Activated B cell treated with CpG ODN at 0.5 μM for 24 hours (primary cell): ENCODE measurements at regions of chr6 and their contacts with region 1.

Region 1: DNA sequence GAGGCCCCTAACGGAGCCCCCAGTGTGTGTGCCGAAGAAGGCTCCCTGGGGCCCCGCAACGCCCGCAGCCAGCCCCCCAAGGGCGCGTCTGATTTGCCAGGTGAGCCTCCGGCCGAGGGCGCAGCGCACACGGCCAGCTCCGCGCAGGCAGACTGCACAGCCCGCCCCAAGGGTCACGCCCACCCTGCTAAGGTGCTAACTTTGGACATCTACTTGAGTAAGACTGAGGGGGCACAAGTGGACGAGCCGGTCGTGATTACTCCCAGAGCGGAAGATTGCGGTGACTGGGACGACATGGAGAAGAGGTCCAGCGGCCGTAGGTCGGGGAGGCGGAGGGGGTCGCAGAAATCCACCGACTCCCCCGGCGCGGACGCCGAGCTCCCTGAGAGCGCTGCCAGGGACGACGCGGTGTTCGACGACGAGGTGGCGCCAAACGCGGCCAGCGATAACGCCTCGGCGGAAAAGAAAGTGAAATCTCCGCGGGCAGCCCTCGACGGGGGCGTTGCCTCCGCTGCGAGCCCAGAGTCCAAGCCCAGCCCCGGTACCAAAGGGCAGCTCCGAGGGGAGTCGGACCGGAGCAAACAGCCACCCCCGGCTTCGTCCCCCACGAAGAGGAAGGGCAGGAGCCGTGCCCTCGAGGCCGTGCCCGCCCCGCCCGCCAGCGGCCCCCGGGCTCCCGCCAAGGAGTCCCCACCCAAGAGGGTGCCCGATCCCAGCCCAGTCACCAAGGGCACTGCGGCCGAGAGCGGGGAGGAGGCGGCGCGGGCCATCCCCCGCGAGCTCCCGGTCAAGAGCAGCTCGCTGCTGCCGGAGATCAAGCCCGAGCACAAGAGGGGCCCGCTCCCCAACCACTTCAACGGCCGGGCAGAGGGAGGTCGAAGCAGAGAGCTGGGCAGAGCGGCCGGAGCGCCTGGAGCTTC is 117.0 kb downstream of the RTN4IP1 start:
- DNase-seq: peak; percentile 79
- ATAC-seq: peak; percentile 68
- H3K4me3 Mint-ChIP-seq: peak overlapping the region; percentile 97
- H3K27ac Mint-ChIP-seq: peak overlapping the region; percentile 94
- H3K4me1 Mint-ChIP-seq: peaks cover 62% of the 10 kb centered on the region
- H3K27me3 Mint-ChIP-seq: no peaks in the 10 kb centered on the region
- CTCF ChIP-seq: no peak

Region 2: GRCh38 chr6:106347341-106347740 is 165.0 kb before region 1 on chr6:
- CTCF ChIA-PET with region 1: no interaction called
- POLR2A ChIA-PET with region 1: no interaction called
- intact Hi-C with region 1: no loop called
- DNase-seq: no peak
- ATAC-seq: no peak
- H3K4me3 Mint-ChIP-seq: no peak overlapping the region
- H3K27ac Mint-ChIP-seq: no peak overlapping the region
- H3K4me1 Mint-ChIP-seq: no peaks in the 10 kb centered on the region
- H3K27me3 Mint-ChIP-seq: peaks cover 13% of the 10 kb centered on the region
- CTCF ChIP-seq: no peak

Region 3: DNA sequence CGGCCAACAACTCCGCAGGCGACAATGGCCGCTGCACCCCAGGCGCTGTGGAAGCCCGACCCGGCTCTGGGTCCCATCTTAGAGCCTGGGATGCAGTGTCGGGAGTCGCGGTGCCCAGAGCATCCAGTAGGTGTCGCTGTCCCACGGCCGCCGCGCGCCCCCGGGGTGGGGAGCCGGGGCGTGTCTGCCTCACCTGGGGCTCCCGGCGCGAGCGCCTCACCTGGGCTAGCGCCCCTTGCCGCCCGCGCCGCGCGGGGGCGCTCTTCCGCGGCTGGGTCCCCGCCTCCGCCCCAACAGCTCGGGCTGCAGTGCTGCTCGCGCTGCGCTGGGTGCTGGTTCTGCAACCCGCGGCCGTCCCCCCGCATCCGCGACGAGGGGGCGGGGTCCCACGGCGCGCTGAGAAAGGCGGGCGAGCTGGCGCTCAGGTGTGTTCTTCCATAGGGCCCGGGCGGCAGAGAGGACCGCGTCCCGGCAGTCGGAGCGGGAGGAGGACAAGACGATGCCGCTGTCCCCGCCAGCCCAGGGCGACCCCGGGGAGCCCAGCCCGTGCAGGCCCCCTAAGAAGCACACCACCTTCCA is 151.8 kb before region 1 on chr6 and contains the start of gene CRYBG1:
- CTCF ChIA-PET with region 1: interaction called, 3 read pairs
- POLR2A ChIA-PET with region 1: no interaction called
- intact Hi-C with region 1: loop called (anchors 2 kb)
- DNase-seq: peak; percentile 67
- ATAC-seq: peak; percentile 80
- H3K4me3 Mint-ChIP-seq: peak within 1 kb of the TSS; percentile 85
- H3K27ac Mint-ChIP-seq: no peak within 1 kb of the TSS
- H3K4me1 Mint-ChIP-seq: peaks cover 11% of the 10 kb centered on the region
- H3K27me3 Mint-ChIP-seq: peaks cover 29% of the 10 kb centered on the region
- CTCF ChIP-seq: peak; percentile 80
- total RNA-seq, gene CRYBG1: 32.3 and 33.6 TPM in 2 replicates

Region 4: GRCh38 chr6:106525111-106525881 is 13.0 kb after region 1 on chr6:
- CTCF ChIA-PET with region 1: interaction called, 94 read pairs
- POLR2A ChIA-PET with region 1: interaction called, 201 read pairs
- intact Hi-C with region 1: loop called (anchors 1 kb)
- DNase-seq: no peak
- ATAC-seq: peak; percentile 35
- H3K4me3 Mint-ChIP-seq: peak overlapping the region; percentile 83
- H3K27ac Mint-ChIP-seq: peak overlapping the region; percentile 89
- H3K4me1 Mint-ChIP-seq: peaks cover 81% of the 10 kb centered on the region
- H3K27me3 Mint-ChIP-seq: no peaks in the 10 kb centered on the region
- CTCF ChIP-seq: no peak

Region 5: GRCh38 chr6:106539936-106540335 is 27.6 kb after region 1 on chr6:
- CTCF ChIA-PET with region 1: interaction called, 12 read pairs
- POLR2A ChIA-PET with region 1: interaction called, 44 read pairs
- intact Hi-C with region 1: no loop called
- DNase-seq: no peak
- ATAC-seq: no peak
- H3K4me3 Mint-ChIP-seq: peak overlapping the region; percentile 37
- H3K27ac Mint-ChIP-seq: peak overlapping the region; percentile 80
- H3K4me1 Mint-ChIP-seq: peaks cover 58% of the 10 kb centered on the region
- H3K27me3 Mint-ChIP-seq: no peaks in the 10 kb centered on the region
- CTCF ChIP-seq: no peak

Region 6: GRCh38 chr6:106556368-106556960 is 44.2 kb after region 1 on chr6:
- CTCF ChIA-PET with region 1: interaction called, 89 read pairs
- POLR2A ChIA-PET with region 1: interaction called, 36 read pairs
- intact Hi-C with region 1: loop called (anchors 1 kb)
- DNase-seq: no peak
- ATAC-seq: peak; percentile 31
- H3K4me3 Mint-ChIP-seq: no peak overlapping the region
- H3K27ac Mint-ChIP-seq: peak overlapping the region; percentile 13
- H3K4me1 Mint-ChIP-seq: peaks cover 22% of the 10 kb centered on the region
- H3K27me3 Mint-ChIP-seq: no peaks in the 10 kb centered on the region
- CTCF ChIP-seq: no peak

Region 7: DNA sequence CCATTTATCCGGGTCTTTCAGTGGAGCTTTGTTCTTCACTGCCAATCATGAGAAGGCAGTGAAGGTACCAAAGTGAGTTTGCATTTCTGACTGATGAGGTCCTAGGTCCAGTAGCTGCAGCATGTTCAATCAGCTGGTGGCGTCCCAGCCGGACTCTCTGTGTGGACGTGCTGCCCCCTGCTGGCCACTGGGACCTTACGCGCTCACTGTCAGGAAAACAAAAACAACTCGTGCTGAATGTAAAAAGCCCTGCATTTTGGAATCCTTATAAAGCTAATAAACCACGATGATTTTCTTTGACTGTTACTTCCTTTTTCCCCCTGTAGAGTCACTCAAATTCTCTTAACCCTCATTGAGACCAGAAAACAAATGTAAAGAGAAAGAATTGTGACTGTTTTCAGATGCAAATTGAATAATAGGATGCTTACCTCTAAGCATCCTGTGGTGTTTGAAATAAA is 467.1 kb after region 1 on chr6:
- CTCF ChIA-PET with region 1: interaction called, 7 read pairs
- POLR2A ChIA-PET with region 1: interaction called, 3 read pairs
- intact Hi-C with region 1: loop called (anchors 1 kb)
- DNase-seq: peak; percentile 79
- ATAC-seq: peak; percentile 32
- H3K4me3 Mint-ChIP-seq: no peak overlapping the region
- H3K27ac Mint-ChIP-seq: no peak overlapping the region
- H3K4me1 Mint-ChIP-seq: peaks cover 19% of the 10 kb centered on the region
- H3K27me3 Mint-ChIP-seq: no peaks in the 10 kb centered on the region
- CTCF ChIP-seq: peak; percentile 28